Ovary (tissue), 10 donors: ENCODE measurements at regions of chr1 and their contacts with region 1.

Region 1: GRCh38 chr1:210400043-210400840 is 71.5 kb downstream of the HHAT start:
- DNase-seq: peak; percentile 25 to 61 (median 36)
- H3K4me3 ChIP-seq: no peak overlapping the region
- H3K27ac ChIP-seq: no peak overlapping the region
- H3K4me1 ChIP-seq: peaks cover 2% of the 10 kb centered on the region
- H3K27me3 ChIP-seq: no peaks in the 10 kb centered on the region
- CTCF ChIP-seq: peak; percentile 19 to 54 (median 44)
- EP300 ChIP-seq: no peak
- POLR2A ChIP-seq: no peak

Region 2: GRCh38 chr1:210360852-210361477 is 39.3 kb before region 1 on chr1:
- intact Hi-C with region 1: loop called in 2 of 4 experiments (anchors 5 kb)
- DNase-seq: no peak
- H3K4me3 ChIP-seq: no peak overlapping the region
- H3K27ac ChIP-seq: no peak overlapping the region
- H3K4me1 ChIP-seq: no peaks in the 10 kb centered on the region
- H3K27me3 ChIP-seq: no peaks in the 10 kb centered on the region
- CTCF ChIP-seq: peak in 2 of 3 donors; percentile 45 to 62
- EP300 ChIP-seq: no peak
- POLR2A ChIP-seq: no peak